AG04450 (cell line): ENCODE measurements at regions of chr11 and their contacts with region 1.

Region 1: DNA sequence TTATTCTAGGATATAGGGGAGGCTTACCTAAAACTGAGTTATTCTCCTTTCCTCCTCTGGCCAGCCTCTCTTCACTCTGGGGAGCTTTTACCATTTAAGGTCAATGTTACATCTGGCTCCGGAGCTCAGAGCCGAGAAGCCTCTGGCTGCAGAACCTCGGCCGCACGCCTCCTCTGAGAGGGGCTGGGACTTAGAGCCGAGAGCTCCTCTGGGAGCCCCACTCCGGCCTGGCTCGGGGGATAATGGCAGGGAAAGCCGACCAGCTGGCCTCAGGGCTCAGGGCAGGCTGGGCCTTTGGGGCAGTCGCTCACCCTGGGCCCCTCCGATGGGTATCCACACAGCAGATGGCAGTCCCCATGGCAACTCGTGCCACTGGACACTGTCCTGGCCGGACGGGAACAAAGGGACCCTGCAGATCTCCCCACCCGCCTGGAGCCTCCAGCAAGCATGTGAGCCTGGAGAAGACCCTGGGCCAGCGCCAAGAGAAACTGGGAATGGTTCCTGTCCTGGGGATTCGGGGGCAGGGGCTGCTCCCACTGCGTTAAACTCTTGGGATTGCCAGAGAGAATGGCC is at the start of gene IRAG1:
- DNase-seq: peak; percentile 69
- H3K4me3 ChIP-seq: peak within 1 kb of the TSS; percentile 78
- H3K27ac ChIP-seq: peak within 1 kb of the TSS; percentile 98
- H3K27me3 ChIP-seq: no peaks in the 10 kb centered on the region
- CTCF ChIP-seq: no peak
- polyA plus RNA-seq, gene IRAG1: 56.6 and 60.3 TPM in 2 replicates

Region 2: DNA sequence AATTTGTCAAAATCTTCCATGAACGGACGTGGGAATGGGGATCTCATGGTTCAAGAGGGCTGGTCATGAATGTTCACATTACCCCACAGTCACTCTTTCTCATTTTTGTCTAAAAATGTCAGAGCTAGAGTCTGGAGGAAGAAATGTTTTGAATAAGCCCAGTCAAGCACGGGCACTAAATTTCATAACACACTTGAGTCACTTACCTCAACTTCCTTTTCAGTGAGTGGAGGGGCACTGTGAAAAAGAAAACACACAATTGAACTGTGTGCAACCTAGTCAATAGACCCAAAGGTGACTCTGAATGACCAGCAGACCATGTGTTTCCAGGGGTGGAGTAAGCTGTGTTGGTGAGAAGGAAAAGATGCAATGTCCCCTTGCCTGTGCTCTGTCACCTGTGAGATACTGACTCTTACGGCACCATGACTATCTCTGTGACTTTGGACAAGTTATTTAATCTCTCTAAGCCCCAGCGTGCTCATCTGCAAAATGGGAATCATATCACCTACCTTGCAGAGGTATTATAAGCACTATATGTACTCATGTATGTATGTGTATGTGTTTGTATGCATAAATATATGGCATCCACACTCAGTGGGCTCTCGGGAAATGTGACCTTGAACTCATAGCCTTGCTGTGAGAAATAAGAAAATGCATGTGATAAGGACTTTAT is 86.9 kb before region 1 on chr11:
- CTCF ChIA-PET with region 1: no interaction called
- POLR2A ChIA-PET with region 1: no interaction called
- DNase-seq: peak; percentile 73
- H3K4me3 ChIP-seq: no peak overlapping the region
- H3K27ac ChIP-seq: peak overlapping the region; percentile 97
- H3K27me3 ChIP-seq: no peaks in the 10 kb centered on the region
- CTCF ChIP-seq: no peak

Region 3: DNA sequence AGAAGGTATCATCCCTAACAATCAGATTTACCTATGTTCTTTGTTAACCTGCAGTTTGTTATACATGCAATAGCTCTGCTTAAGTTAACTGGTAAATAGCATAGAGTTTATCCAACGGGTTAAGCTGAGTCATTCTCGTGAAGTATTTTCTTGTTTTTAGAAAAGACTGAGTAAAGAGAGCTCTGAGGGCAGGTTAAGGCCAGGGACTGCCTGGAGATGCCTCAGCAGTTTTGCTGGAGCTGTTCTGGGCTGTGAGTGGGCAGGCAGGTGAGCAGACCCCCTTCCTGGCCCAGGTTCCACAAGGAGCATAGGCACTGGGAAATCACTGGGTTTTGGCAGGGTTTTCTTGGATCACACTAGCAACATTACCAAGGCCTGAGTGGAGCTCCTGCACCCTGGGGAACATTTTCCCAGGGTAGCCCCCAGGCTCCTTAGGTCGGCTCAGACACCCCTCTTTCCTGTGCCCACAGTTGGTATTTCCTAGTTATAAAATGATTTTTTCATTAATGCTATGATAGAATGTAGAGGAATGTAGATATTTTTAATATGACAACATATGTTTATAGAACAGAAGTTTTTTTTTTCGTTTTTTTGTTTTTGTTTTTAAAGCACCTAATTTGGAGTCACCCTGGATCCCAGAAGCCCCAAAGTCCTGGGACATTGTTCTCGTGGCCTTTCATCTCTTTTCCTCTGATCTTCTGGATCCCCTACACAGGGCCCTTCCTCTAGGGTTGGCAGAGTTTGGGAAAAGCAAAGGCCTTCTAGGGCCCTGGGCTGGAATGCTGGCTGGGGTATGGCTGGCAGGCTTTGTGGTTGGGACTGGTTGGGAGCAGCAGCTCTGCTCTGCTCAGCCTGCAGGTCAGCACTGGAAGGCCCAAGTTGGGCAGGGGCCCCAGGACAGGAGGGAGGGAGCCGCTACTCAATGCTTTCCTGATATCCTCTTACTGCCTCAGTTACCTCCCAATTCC is 26.8 kb before region 1 on chr11:
- CTCF ChIA-PET with region 1: no interaction called
- POLR2A ChIA-PET with region 1: interaction called, 11 read pairs
- DNase-seq: no peak
- H3K4me3 ChIP-seq: no peak overlapping the region
- H3K27ac ChIP-seq: peak overlapping the region; percentile 99
- H3K27me3 ChIP-seq: no peaks in the 10 kb centered on the region
- CTCF ChIP-seq: no peak

Region 4: DNA sequence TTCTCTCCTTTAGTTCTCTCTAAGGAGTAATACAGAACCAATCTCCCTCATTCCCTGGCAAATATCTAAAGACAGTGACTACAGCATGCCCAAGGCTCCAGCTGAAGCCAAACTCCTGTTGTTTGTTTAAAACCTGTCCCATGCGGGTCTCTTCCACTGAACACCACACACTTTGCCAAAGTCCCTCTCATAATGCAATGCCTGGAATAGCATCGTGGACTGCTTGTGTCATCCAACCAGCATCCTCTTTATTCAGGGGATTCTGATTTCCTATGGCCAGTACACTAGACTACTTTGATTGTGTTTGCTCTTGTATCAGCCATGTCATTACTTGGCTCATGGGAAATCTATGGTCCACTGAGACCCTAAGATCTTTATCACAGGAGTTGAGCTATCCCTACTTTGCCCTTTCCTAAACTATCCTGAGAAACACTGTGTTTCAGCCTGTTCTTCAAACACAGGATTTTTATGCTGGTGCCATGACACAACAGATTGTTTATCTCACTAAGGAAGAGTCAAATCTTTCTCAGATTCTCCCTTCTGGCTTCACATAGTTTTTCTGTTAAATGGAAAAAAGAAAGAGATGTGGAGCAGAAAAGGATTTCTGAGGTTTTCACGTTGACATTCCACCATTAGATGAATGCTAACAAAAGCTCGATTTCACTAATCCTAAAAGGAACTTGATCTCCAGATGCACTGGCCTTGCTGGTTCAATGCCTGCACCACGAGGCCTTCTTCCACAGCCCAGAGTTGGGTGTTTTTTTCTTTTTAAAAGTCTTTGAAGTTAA is 15.9 kb after region 1 on chr11:
- CTCF ChIA-PET with region 1: interaction called, 3 read pairs
- POLR2A ChIA-PET with region 1: interaction called, 14 read pairs
- DNase-seq: peak; percentile 72
- H3K4me3 ChIP-seq: no peak overlapping the region
- H3K27ac ChIP-seq: peak overlapping the region; percentile 69
- H3K27me3 ChIP-seq: no peaks in the 10 kb centered on the region
- CTCF ChIP-seq: no peak

Region 5: GRCh38 chr11:10728789-10729472 is 35.3 kb after region 1 on chr11:
- CTCF ChIA-PET with region 1: interaction called, 5 read pairs
- POLR2A ChIA-PET with region 1: interaction called, 26 read pairs
- DNase-seq: no peak
- H3K4me3 ChIP-seq: no peak overlapping the region
- H3K27ac ChIP-seq: no peak overlapping the region
- H3K27me3 ChIP-seq: no peaks in the 10 kb centered on the region
- CTCF ChIP-seq: no peak